ENCODE measurements at regions of chr4 and their contacts with region 1.

Region 1: GRCh38 chr4:52659001-52659721 is at the start of gene USP46:
- DNase-seq: peak in 1 of 2 donors; percentile 87
- H3K4me3 ChIP-seq: peak within 1 kb of the TSS; percentile 81 to 96
- H3K27ac ChIP-seq: peak within 1 kb of the TSS; percentile 94
- H3K4me1 ChIP-seq: peaks cover 45% of the 10 kb centered on the region
- H3K27me3 ChIP-seq: no peaks in the 10 kb centered on the region
- CTCF ChIP-seq: no peak
- POLR2A ChIP-seq: peak in 1 of 2 donors; percentile 52
- total RNA-seq, gene USP46: 10.6 TPM

Region 2: DNA sequence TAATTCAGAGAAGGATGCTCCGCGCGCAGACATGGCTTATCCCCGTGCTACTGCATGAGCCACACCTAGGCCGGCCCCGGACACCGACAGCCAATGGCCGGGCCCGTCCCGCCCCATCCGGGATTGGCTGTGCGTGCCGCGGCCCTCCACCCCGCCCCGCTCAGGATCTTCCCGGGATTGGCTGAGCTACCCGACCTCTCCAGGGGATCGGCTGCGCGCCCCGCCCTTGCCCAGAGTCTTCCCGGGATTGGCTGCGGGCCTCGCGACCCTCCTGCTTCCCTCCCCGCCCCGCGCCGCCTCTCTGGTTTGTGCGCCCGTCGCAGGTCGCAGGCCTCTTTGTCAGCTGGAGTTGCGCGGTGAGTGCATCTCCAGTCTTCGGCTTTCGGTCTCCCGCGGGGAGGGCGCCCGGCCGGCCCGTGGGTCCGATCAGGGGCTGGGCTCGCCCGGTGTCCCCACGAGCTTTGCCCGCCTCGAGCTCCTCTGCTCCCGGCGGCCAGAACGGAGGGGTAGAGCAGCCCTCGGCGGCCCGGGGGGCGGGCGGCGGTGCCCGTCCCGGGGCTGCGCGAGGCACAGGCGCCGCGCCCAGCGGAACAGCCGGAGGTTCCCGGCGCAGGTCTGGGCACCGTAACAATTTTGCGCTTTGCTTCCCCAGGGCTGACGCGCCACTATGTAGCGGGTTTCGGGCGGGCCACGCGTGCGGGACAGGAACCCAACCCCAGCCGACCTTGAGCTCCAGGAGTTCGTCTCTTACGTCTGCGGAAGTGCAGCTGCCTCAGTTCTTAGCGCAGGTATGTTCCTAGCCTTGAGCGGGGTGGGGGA is 53.2 kb after region 1 on chr4:
- intact Hi-C with region 1: loop called (anchors 5 kb)
- DNase-seq: peak; percentile 98
- H3K4me3 ChIP-seq: peak overlapping the region; percentile 76 to 87
- H3K27ac ChIP-seq: peak overlapping the region; percentile 93
- H3K4me1 ChIP-seq: peaks cover 26% of the 10 kb centered on the region
- H3K27me3 ChIP-seq: no peaks in the 10 kb centered on the region
- CTCF ChIP-seq: no peak
- POLR2A ChIP-seq: peak; percentile 24 to 91

Region 3: GRCh38 chr4:52869196-52869595 is 210.0 kb after region 1 on chr4:
- intact Hi-C with region 1: loop called (anchors 5 kb)
- DNase-seq: no peak
- H3K4me3 ChIP-seq: peak overlapping the region in 1 of 2 donors; percentile 17
- H3K27ac ChIP-seq: peak overlapping the region; percentile 63
- H3K4me1 ChIP-seq: peaks cover 34% of the 10 kb centered on the region
- H3K27me3 ChIP-seq: no peaks in the 10 kb centered on the region
- CTCF ChIP-seq: no peak
- POLR2A ChIP-seq: no peak

Measured in vagina (tissue), 2 donors.